ENCODE measurements at regions of chr13 and their contacts with region 1.

Region 1: GRCh38 chr13:20924758-20925394 is 22.3 kb upstream of the XPO4 start:
- DNase-seq: peak; percentile 73
- ATAC-seq: peak; percentile 62

Region 2: GRCh38 chr13:20182231-20182846 is 742.5 kb before region 1 on chr13:
- intact Hi-C with region 1: loop called (anchors 10 kb)
- DNase-seq: no peak
- ATAC-seq: peak; percentile 86

Region 3: DNA sequence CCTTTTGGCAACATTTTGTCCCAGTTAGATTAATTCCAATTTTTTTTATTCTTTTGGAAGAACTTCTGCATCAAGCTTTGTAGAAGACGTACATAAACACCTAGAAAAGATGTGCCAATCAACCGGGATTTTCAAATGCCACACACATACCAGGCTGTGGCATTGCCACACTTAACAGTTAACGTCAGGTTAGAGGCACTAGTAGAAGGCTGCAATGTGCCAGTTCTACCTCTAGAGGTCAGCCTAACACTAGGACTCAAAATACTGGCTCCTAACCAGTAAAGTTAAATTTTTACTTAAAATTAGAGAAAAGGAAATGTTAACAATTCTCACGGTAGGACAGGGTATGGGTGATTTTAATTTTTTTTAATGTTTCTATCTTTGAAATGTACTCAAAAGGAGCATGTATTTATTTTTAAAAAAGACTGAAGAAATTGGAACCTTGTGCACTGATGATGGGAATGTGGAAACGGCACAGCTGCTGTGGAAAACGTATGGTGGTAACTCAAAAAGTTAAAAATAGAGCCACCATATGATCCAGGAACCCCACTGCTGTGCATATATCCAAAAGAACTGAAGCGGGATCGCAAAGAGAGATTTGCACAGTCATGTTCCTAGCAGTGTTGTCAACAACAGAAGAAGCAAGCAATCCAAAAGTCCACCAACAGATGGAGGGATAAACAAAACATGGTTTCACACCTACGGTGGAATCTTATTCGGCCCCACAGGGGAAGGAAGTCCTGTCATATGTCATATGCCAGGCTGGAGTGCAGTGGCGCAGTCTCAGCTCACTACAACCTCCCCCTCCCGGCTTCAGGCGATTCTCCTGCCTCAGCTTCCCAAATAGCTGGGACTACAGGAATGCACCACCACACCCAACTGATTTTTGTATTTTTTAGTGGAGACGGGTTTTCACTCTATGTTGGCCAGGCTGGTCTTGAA is 429.5 kb before region 1 on chr13:
- intact Hi-C with region 1: loop called (anchors 10 kb)
- DNase-seq: no peak
- ATAC-seq: peak; percentile 86

Region 4: DNA sequence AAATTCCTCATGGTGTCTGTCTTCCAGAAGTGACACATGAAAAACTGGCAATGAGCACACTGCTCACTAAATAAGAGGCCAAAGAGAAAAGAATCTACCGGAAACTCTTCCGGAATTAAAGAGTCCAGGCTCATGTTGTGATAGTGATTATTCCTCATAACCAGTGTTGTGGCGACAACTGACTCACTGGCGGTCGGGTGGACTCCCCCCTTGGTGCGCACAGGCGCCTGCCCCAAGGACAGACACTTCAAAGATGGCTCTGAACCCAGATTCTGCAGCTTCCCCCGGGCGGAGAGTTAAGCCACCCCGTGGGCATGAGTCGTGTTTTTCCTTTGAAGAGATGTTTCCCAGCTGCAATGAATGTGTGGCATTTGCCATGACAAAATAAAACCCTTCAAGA is 211.1 kb before region 1 on chr13:
- intact Hi-C with region 1: loop called (anchors 5 kb)
- DNase-seq: no peak
- ATAC-seq: peak; percentile 29

Measured in left ventricle myocardium superior (tissue), 1 donor.